GM13976 (cell line): ENCODE measurements at regions of chr3 and their contacts with region 1.

Region 1: GRCh38 chr3:118884748-118885206 is 149.9 kb downstream of the IGSF11 start:
- DNase-seq: peak; percentile 28
- CTCF ChIP-seq: peak; percentile 96

Region 2: GRCh38 chr3:119098619-119099222 is 213.9 kb after region 1 on chr3:
- in situ Hi-C with region 1: loop called (anchors 5 kb)
- DNase-seq: peak; percentile 47
- CTCF ChIP-seq: peak; percentile 36